Psoas muscle (tissue), 8 donors: ENCODE measurements at regions of chr1 and their contacts with region 1.

Region 1: GRCh38 chr1:230191079-230191804 is 124.2 kb downstream of the GALNT2 start:
- DNase-seq: peak in 1 of 2 donors; percentile 66
- ATAC-seq: peak; percentile 54 to 94 (median 82)
- H3K4me3 ChIP-seq: no peak overlapping the region
- H3K27ac ChIP-seq: peak overlapping the region; percentile 7
- H3K4me1 ChIP-seq: peaks cover 18% of the 10 kb centered on the region
- H3K27me3 ChIP-seq: no peaks in the 10 kb centered on the region
- CTCF ChIP-seq: no peak

Region 2: GRCh38 chr1:229856009-229856650 is 335.1 kb before region 1 on chr1:
- intact Hi-C with region 1: loop called in 1 of 2 experiments (anchors 10 kb)
- DNase-seq: no peak
- ATAC-seq: peak; percentile 70 to 83 (median 81)
- H3K4me3 ChIP-seq: peak overlapping the region; percentile 34
- H3K27ac ChIP-seq: no peak overlapping the region
- H3K4me1 ChIP-seq: peaks cover 5% of the 10 kb centered on the region
- H3K27me3 ChIP-seq: no peaks in the 10 kb centered on the region
- CTCF ChIP-seq: no peak